Testis (tissue), 5 donors: ENCODE measurements at regions of chr5 and their contacts with region 1.

Region 1: GRCh38 chr5:173293817-173294672 is 34.2 kb downstream of the STC2 start:
- DNase-seq: peak; percentile 87
- H3K4me3 ChIP-seq: peak overlapping the region in 1 of 2 donors; percentile 30
- H3K27ac ChIP-seq: no peak overlapping the region
- H3K4me1 ChIP-seq: peaks cover 9% of the 10 kb centered on the region
- H3K27me3 ChIP-seq: no peaks in the 10 kb centered on the region
- CTCF ChIP-seq: peak; percentile 89 to 93 (median 92)
- POLR2A ChIP-seq: no peak

Region 2: DNA sequence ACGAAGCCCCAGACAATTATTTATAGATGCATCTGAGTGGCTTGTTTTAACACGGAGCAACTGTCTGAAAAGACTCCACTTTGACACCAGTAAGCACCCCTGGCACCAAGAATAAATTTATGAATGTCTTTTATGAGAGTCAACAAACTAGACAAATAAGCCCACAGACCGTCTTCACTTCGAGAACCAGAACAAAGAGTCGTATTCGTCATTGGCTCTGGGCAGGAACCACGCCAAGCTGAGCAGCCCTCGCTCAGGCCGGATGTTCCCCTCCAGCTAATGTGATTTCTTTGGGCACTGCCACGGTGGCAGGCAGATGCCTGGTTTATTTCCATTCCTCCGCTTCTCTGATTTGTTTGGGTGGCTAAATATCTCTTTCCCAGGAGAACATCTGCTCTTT is 126.1 kb after region 1 on chr5:
- intact Hi-C with region 1: no loop called
- DNase-seq: no peak
- H3K4me3 ChIP-seq: no peak overlapping the region
- H3K27ac ChIP-seq: no peak overlapping the region
- H3K4me1 ChIP-seq: no peaks in the 10 kb centered on the region
- H3K27me3 ChIP-seq: no peaks in the 10 kb centered on the region
- CTCF ChIP-seq: no peak
- POLR2A ChIP-seq: no peak

Region 3: GRCh38 chr5:173498286-173498685 is 204.2 kb after region 1 on chr5:
- intact Hi-C with region 1: loop called (anchors 10 kb)
- DNase-seq: peak; percentile 54
- H3K4me3 ChIP-seq: no peak overlapping the region
- H3K27ac ChIP-seq: peak overlapping the region in 1 of 2 donors; percentile 47
- H3K4me1 ChIP-seq: peaks cover 40% of the 10 kb centered on the region
- H3K27me3 ChIP-seq: no peaks in the 10 kb centered on the region
- CTCF ChIP-seq: no peak
- POLR2A ChIP-seq: no peak

Region 4: DNA sequence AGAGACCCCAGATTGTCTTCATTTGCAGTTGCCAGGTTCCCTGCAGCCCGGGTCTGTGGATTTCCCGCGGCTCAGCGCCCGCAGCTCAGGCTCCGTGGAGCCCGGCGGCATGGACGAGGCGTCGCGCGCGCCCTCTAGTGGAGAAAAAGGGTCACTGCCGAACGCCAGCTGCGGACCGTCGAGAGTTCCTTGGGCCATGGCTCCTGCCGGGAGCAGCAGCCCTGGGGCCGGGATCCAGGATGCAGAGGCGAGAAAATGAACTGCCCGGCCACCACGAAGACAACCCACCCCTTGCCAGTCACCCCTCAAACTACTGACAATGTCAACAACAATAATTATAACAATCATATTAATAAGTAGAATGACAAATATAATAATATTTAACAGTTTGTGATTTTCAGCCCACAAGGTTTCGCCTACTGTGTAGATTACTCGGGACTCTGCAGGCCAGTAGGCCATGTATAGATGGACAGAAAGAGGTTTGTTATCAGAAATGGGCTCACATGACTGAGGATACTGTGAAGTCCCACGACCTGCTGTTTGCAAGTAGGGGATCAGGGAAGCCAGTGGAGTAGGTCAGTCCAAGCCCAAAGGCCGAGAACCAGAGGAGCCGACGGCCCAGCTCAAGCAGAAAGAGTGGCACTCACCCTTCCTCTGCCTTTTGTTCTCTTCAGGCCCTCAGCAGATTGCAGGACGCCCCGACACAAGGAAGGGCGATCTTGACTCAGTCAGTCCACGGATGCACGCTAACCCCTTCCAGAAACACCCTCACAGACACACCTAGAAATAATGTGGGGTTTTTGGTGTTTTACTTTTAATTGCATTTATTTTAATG is 279.3 kb after region 1 on chr5:
- intact Hi-C with region 1: loop called (anchors 10 kb)
- DNase-seq: peak; percentile 85
- H3K4me3 ChIP-seq: no peak overlapping the region
- H3K27ac ChIP-seq: no peak overlapping the region
- H3K4me1 ChIP-seq: peaks cover 6% of the 10 kb centered on the region
- H3K27me3 ChIP-seq: no peaks in the 10 kb centered on the region
- CTCF ChIP-seq: peak; percentile 78 to 99 (median 92)
- POLR2A ChIP-seq: no peak